Vagina (tissue), 2 donors: ENCODE measurements at regions of chr4 and their contacts with region 1.

Region 1: DNA sequence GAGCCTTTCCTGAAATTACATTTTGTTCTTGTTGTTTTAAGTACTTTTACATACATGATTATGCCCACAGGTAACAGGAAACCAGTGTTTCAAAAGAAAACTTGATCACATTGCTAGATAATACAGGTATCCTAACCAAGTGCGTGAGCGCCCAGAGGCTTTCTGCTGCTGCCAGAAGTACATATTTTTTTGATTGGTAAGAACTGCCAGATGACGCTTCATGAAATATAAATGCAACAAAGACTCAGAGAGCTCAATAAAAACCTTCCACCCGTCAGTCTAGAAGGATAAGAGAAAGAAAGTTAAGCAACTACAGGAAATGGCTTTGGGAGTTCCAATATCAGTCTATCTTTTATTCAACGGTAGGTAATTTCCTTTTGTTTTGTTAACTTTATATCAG is at the start of gene EPGN:
- DNase-seq: no peak
- H3K4me3 ChIP-seq: peak within 1 kb of the TSS in 1 of 2 donors; percentile 18
- H3K27ac ChIP-seq: no peak within 1 kb of the TSS
- H3K4me1 ChIP-seq: no peaks in the 10 kb centered on the region
- H3K27me3 ChIP-seq: no peaks in the 10 kb centered on the region
- CTCF ChIP-seq: no peak
- POLR2A ChIP-seq: no peak
- total RNA-seq, gene EPGN: 6.9 TPM

Region 2: GRCh38 chr4:74189331-74190043 is 118.7 kb before region 1 on chr4:
- intact Hi-C with region 1: loop called (anchors 10 kb)
- DNase-seq: no peak
- H3K4me3 ChIP-seq: no peak overlapping the region
- H3K27ac ChIP-seq: no peak overlapping the region
- H3K4me1 ChIP-seq: no peaks in the 10 kb centered on the region
- H3K27me3 ChIP-seq: no peaks in the 10 kb centered on the region
- CTCF ChIP-seq: peak; percentile 8 to 26 (median 20)
- POLR2A ChIP-seq: no peak

Region 3: GRCh38 chr4:74335341-74336021 is 27.3 kb after region 1 on chr4:
- intact Hi-C with region 1: no loop called
- DNase-seq: no peak
- H3K4me3 ChIP-seq: no peak overlapping the region
- H3K27ac ChIP-seq: no peak overlapping the region
- H3K4me1 ChIP-seq: no peaks in the 10 kb centered on the region
- H3K27me3 ChIP-seq: no peaks in the 10 kb centered on the region
- CTCF ChIP-seq: no peak
- POLR2A ChIP-seq: no peak

Region 4: GRCh38 chr4:74793757-74794340 is 485.6 kb after region 1 on chr4:
- intact Hi-C with region 1: no loop called
- DNase-seq: no peak
- H3K4me3 ChIP-seq: peak overlapping the region; percentile 52 to 56
- H3K27ac ChIP-seq: peak overlapping the region; percentile 62
- H3K4me1 ChIP-seq: peaks cover 15% of the 10 kb centered on the region
- H3K27me3 ChIP-seq: no peaks in the 10 kb centered on the region
- CTCF ChIP-seq: no peak
- POLR2A ChIP-seq: no peak

Region 5: GRCh38 chr4:75004755-75005668 is 696.8 kb after region 1 on chr4:
- intact Hi-C with region 1: no loop called
- DNase-seq: no peak
- H3K4me3 ChIP-seq: no peak overlapping the region
- H3K27ac ChIP-seq: no peak overlapping the region
- H3K4me1 ChIP-seq: no peaks in the 10 kb centered on the region
- H3K27me3 ChIP-seq: no peaks in the 10 kb centered on the region
- CTCF ChIP-seq: no peak
- POLR2A ChIP-seq: no peak